Activated CD4-positive, alpha-beta memory T cell treated with anti-CD3 and anti-CD28 coated beads for 36 hours (primary cell): ENCODE measurements at regions of chr3 and their contacts with region 1.

Region 1: DNA sequence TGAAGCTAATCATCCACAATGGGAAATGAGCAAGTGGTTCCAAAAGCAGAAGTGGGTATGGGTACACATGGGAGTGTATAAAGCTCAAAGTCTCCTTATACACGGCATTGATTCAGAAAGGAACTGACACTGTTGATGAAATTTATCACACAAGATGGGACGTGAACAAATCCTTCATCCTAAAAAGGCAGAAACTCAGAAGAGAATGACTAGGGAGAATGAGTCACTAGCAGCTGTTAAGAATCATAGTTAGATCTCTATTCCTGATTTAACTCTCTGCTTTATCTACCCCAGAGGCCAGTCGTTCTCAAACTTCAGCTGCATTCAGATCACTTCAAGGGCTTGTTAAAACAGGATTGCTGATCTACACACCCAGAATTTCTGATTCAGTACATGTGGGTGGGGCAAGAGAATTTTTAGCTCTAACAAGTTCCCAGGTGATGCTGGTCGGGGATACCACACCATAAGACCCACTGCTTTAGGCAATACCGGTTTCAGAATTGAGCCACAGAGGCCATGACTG is 97.7 kb upstream of the PHLDB2 start:
- DNase-seq: peak; percentile 29
- H3K4me3 Mint-ChIP-seq: no peak overlapping the region
- H3K27ac Mint-ChIP-seq: peak overlapping the region; percentile 51
- H3K4me1 Mint-ChIP-seq: peaks cover 15% of the 10 kb centered on the region
- H3K27me3 Mint-ChIP-seq: no peaks in the 10 kb centered on the region

Region 2: DNA sequence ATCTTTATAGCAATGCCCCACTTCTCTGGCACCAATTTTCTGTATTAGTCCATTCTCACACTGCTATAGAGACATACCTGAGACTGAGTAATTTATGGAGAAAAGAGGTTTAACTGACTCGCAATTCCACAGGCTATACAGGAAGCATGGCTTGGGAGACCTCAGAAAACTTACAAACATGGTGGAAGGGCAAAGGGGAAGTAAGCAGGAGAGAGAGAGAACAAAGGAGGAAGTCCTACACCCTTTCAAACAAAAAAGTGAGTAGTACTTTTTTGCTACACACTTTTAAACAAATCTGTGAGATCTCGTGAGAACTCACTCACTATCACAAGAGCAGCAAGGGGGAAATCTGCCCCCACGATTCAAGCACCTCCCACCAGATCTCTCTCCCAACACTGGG is 98.5 kb before region 1 on chr3:
- CTCF ChIA-PET with region 1: no interaction called
- POLR2A ChIA-PET with region 1: no interaction called
- intact Hi-C with region 1: no loop called
- DNase-seq: no peak
- H3K4me3 Mint-ChIP-seq: no peak overlapping the region
- H3K27ac Mint-ChIP-seq: no peak overlapping the region
- H3K4me1 Mint-ChIP-seq: peaks cover 29% of the 10 kb centered on the region
- H3K27me3 Mint-ChIP-seq: no peaks in the 10 kb centered on the region

Region 3: DNA sequence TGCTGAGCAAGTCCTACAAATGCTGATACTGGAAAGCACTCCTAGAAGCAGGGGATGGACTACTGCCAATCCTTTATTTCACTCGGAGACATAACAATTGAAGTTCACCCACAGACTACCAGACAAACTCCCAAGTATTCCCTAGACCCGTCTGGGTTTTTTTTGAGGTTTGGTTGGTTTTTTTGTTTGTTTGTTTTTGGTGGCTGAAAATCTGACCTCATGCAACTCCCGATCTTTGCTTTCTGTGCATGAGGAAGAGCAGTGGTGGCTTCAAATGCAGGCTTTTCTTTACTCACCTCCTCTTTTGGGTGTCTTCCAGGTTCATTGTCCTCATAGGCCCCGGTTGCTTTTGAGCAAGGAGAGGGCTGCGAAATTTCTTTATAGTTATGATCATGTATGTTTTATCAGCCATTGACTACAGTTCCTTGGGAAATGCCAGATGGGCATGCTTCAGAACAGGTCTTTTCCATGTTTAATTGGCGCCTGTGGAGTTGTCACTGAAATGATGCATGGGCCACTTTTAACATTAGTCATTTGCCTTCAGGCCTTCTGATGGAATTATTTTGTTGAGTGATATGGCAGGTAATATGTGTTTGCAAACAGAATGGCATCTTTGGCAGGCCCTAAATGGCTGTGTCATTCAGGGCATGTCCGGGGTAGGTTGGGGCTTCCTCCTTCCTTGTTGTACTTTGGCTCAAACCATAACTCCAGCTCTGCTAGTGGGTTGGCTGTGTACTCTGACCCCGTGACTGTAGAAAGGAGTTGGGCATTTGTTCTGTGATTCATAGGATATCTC is 85.0 kb before region 1 on chr3:
- CTCF ChIA-PET with region 1: no interaction called
- POLR2A ChIA-PET with region 1: no interaction called
- intact Hi-C with region 1: loop called (anchors 2 kb)
- DNase-seq: peak; percentile 53
- H3K4me3 Mint-ChIP-seq: peak overlapping the region; percentile 94
- H3K27ac Mint-ChIP-seq: peak overlapping the region; percentile 59
- H3K4me1 Mint-ChIP-seq: peaks cover 64% of the 10 kb centered on the region
- H3K27me3 Mint-ChIP-seq: no peaks in the 10 kb centered on the region

Region 4: DNA sequence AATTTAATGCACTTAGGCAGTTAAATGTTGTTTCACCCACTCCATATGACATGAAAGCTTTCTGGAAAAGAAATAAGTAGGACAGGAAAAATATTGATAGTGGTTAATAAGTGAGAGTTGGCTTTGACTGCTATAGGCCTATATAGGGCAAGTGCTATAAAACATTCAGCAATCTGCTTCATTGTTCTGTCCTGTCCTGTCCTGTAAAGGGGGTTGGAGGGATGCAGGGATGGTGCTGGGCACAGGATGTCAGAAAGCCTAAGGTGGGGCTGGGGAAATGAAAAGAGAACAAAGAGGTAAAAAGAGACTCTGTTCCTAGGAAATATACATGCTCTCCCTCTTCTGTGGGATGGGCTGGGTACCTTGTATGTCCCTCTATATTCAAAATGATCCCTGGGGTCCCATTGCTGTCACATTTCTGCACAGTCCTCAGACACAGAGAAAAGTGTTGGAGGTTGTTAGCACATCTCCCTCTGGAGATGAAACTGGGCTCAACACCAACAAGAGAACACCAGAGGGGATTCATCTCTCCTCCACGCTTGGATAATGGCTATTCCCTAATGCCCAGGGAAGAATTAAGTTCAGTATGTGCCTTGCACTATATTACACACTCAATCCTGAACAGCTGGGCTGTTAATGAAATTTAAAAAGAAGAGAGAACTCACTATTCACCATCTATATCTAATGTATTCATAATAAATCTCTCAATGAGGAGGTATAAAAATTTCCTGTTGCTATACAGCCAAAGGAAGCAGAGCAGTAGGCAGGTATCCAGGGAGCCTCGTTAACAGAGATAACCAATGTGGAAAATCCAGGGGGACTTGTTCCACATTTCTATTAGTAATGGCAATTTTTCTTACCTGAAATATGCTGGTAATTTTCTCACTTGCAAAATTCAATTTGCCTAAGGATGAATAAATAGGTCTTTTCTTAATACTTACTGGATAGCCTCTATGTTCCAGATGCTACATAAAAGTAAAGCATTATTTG is 58.1 kb before region 1 on chr3:
- CTCF ChIA-PET with region 1: no interaction called
- POLR2A ChIA-PET with region 1: no interaction called
- intact Hi-C with region 1: no loop called
- DNase-seq: no peak
- H3K4me3 Mint-ChIP-seq: no peak overlapping the region
- H3K27ac Mint-ChIP-seq: no peak overlapping the region
- H3K4me1 Mint-ChIP-seq: peaks cover 49% of the 10 kb centered on the region
- H3K27me3 Mint-ChIP-seq: no peaks in the 10 kb centered on the region

Region 5: GRCh38 chr3:111859974-111860859 is 98.8 kb after region 1 on chr3:
- CTCF ChIA-PET with region 1: no interaction called
- POLR2A ChIA-PET with region 1: interaction called, 4 read pairs
- intact Hi-C with region 1: loop called (anchors 5 kb)
- DNase-seq: peak; percentile 71
- H3K4me3 Mint-ChIP-seq: peak overlapping the region; percentile 79
- H3K27ac Mint-ChIP-seq: no peak overlapping the region
- H3K4me1 Mint-ChIP-seq: peaks cover 13% of the 10 kb centered on the region
- H3K27me3 Mint-ChIP-seq: peaks cover 7% of the 10 kb centered on the region